ENCODE measurements at regions of chr11 and their contacts with region 1.

Region 1: GRCh38 chr11:66069715-66070603 is at the start of gene PACS1:
- DNase-seq: peak; percentile 77 to 92 (median 90)
- ATAC-seq: peak; percentile 74
- H3K4me3 ChIP-seq: peak within 1 kb of the TSS; percentile 72
- H3K27ac ChIP-seq: peak within 1 kb of the TSS; percentile 73
- H3K4me1 ChIP-seq: peaks cover 19 to 31% of the 10 kb centered on the region in 2 experiments
- H3K27me3 ChIP-seq: no peaks in the 10 kb centered on the region
- CTCF ChIP-seq: no peak
- EP300 ChIP-seq: no peak
- POLR2A ChIP-seq: peak; percentile 61
- RAD21 ChIP-seq: no peak
- polyA plus RNA-seq, gene PACS1: 0.34 to 0.38 TPM

Region 2: DNA sequence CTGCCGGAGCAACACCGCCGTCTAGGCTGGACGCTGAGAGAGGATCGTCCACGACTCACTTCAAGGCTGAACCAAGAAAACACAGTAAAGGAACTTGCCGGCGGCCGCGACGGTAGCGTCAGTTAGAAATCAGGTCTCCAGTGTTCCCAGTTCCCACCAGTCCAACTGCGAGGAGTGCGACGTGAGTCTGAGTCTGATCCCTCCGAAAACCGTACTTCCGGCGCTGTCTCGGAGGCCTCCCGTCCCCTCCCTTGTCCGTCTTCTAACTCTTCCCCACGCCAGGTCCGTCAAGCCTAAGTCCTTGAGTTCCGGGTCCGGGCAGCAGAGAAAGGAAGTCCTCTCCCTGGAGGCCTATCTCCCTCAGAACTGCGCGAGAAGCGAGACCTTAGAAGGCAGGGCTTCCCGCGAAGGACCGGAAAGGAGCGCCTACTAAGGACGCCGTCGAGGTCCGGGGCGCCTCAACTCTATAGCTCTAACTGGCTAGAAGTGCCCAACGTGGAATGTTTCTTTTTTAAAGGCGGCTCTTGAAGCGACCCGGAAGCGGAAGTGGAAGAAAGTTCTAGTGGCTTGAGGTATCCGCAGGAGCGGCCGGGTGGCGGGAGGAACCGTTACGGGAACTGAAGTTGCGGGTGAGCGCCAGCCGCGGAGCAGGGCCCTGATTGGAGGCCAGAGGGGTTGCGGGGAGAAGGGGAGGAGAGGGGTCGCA is 67.9 kb before region 1 on chr11 and contains the starts of genes BANF1 and EIF1AD:
- CTCF ChIA-PET with region 1: no interaction called
- POLR2A ChIA-PET with region 1: no interaction called
- in situ Hi-C with region 1: no loop called
- intact Hi-C with region 1: loop called (anchors 5 kb)
- DNase-seq: peak; percentile 82 to 99 (median 88)
- ATAC-seq: peak; percentile 86
- H3K4me3 ChIP-seq: peak within 1 kb of the TSS; percentile 95
- H3K27ac ChIP-seq: peak within 1 kb of the TSS; percentile 99
- H3K4me1 ChIP-seq: peaks cover 20 to 22% of the 10 kb centered on the region in 2 experiments; a peak in 4 of 5 replicates
- H3K27me3 ChIP-seq: no peaks in the 10 kb centered on the region
- CTCF ChIP-seq: peak in 1 of 3 experiments; percentile 3; a peak in 1 of 6 replicates
- EP300 ChIP-seq: peak; percentile 64
- POLR2A ChIP-seq: peak; percentile 91
- RAD21 ChIP-seq: peak; percentile 2 to 10; a peak in 1 of 4 replicates
- polyA plus RNA-seq, gene BANF1: 631 to 651 TPM
- polyA plus RNA-seq, gene EIF1AD: 66.9 to 98.8 TPM

Region 3: DNA sequence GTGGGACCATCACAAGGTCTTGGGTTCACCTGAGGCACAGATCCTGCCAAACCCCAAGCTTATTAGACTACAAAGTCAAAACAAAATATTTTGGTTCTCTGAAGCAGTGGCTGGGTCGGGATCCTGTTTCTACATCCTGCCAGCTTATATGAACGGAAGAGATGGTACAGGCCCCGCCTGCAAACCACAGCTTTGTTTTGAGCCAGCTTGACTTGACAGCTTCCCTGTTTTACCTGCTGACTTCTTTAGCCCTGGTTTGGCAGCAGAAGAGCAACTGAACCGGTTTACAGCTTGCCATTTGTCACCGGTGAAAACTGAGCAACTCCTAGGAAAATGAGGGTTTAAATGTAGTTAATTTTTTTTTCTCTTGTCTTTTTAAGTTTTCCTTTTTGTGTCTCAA is 11.5 kb after region 1 on chr11:
- CTCF ChIA-PET with region 1: no interaction called
- POLR2A ChIA-PET with region 1: interaction called, 44 read pairs
- in situ Hi-C with region 1: no loop called
- intact Hi-C with region 1: no loop called
- DNase-seq: peak in 2 of 4 experiments; percentile 51
- ATAC-seq: peak; percentile 59
- H3K4me3 ChIP-seq: no peak overlapping the region
- H3K27ac ChIP-seq: peak overlapping the region; percentile 59; the same call in 2 of the 3 replicates
- H3K4me1 ChIP-seq: peaks cover 13 to 46% of the 10 kb centered on the region in 2 experiments
- H3K27me3 ChIP-seq: no peaks in the 10 kb centered on the region
- CTCF ChIP-seq: no peak
- EP300 ChIP-seq: no peak
- POLR2A ChIP-seq: no peak
- RAD21 ChIP-seq: no peak

Region 4: GRCh38 chr11:66136752-66137123 is 66.8 kb after region 1 on chr11:
- CTCF ChIA-PET with region 1: interaction called, 4 read pairs
- POLR2A ChIA-PET with region 1: no interaction called
- in situ Hi-C with region 1: no loop called
- intact Hi-C with region 1: loop called (anchors 1 kb)
- DNase-seq: no peak
- ATAC-seq: no peak
- H3K4me3 ChIP-seq: no peak overlapping the region
- H3K27ac ChIP-seq: no peak overlapping the region
- H3K4me1 ChIP-seq: peaks cover 4 to 6% of the 10 kb centered on the region in 2 experiments; a peak in 4 of 5 replicates
- H3K27me3 ChIP-seq: no peaks in the 10 kb centered on the region
- CTCF ChIP-seq: no peak
- EP300 ChIP-seq: no peak
- POLR2A ChIP-seq: no peak
- RAD21 ChIP-seq: no peak